HepG2 (cell line): ENCODE measurements at regions of chr5 and their contacts with region 1.

Region 1: DNA sequence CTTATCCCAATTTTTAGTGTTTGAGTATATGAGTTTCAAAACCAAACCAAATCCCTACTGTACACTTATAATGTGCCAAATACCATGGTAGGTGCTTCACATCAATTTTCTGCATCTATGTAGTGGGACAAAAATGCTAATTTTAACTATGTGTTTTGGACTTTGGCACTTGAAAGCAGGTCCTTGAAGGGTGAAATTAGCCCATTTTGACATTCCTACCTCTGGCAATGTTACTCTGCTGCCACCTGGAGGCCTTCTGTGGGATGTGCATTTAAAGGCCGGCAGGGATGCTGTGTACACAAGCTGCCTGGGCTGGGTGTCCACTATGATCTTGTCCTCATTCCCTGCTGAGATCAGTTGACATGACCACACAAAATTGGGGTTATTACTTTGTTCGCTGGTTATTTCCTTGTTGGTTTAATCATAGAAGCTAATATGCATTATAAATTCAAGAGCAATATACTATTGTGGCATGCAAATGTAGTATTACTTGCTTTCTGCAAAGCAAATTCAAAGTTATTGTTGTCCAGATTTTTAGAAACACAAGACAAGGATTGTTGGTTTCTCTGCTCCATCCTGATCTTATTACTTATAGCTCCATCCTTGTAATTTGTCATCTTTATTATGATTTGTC is 166.8 kb downstream of the ARHGEF28 start:
- DNase-seq: peak; percentile 74
- ATAC-seq: peak; percentile 89
- H3K4me3 ChIP-seq: no peak overlapping the region
- H3K27ac ChIP-seq: no peak overlapping the region
- H3K4me1 ChIP-seq: peaks cover 36% of the 10 kb centered on the region
- H3K27me3 ChIP-seq: no peaks in the 10 kb centered on the region
- CTCF ChIP-seq: peak; percentile 96
- EP300 ChIP-seq: no peak; a peak in 1 of 4 replicates
- POLR2A ChIP-seq: no peak
- RAD21 ChIP-seq: peak; percentile 94

Region 2: GRCh38 chr5:73519531-73520283 is 273.1 kb before region 1 on chr5:
- CTCF ChIA-PET with region 1: interaction called, 4 read pairs
- POLR2A ChIA-PET with region 1: no interaction called
- in situ Hi-C with region 1: no loop called
- intact Hi-C with region 1: loop called (anchors 1 kb)
- DNase-seq: peak; percentile 84
- ATAC-seq: peak; percentile 98
- H3K4me3 ChIP-seq: peak overlapping the region; percentile 20 to 58 (median 44); a peak in 4 of 6 replicates
- H3K27ac ChIP-seq: no peak overlapping the region
- H3K4me1 ChIP-seq: 0 out of 2 replicates have a peak, but pooled peaks cover 5% of the 10 kb centered on the region
- H3K27me3 ChIP-seq: no peaks in the 10 kb centered on the region
- CTCF ChIP-seq: peak; percentile 95
- EP300 ChIP-seq: no peak
- POLR2A ChIP-seq: no peak
- RAD21 ChIP-seq: peak; percentile 87

Region 3: GRCh38 chr5:73591102-73591695 is 201.6 kb before region 1 on chr5:
- CTCF ChIA-PET with region 1: interaction called, 37 read pairs
- POLR2A ChIA-PET with region 1: no interaction called
- in situ Hi-C with region 1: loop called (anchors 5 kb)
- intact Hi-C with region 1: loop called (anchors 1 kb)
- DNase-seq: peak; percentile 79
- ATAC-seq: peak; percentile 77
- H3K4me3 ChIP-seq: no peak overlapping the region
- H3K27ac ChIP-seq: no peak overlapping the region
- H3K4me1 ChIP-seq: peaks cover 9% of the 10 kb centered on the region
- H3K27me3 ChIP-seq: no peaks in the 10 kb centered on the region; a peak in 1 of 5 replicates
- CTCF ChIP-seq: peak; percentile 78
- EP300 ChIP-seq: no peak
- POLR2A ChIP-seq: no peak
- RAD21 ChIP-seq: peak; percentile 81

Region 4: GRCh38 chr5:73693481-73694061 is 99.2 kb before region 1 on chr5:
- CTCF ChIA-PET with region 1: interaction called, 4 read pairs
- POLR2A ChIA-PET with region 1: no interaction called
- in situ Hi-C with region 1: no loop called
- intact Hi-C with region 1: loop called (anchors 1 kb)
- DNase-seq: peak; percentile 56
- ATAC-seq: peak; percentile 87
- H3K4me3 ChIP-seq: no peak overlapping the region
- H3K27ac ChIP-seq: peak overlapping the region; percentile 43
- H3K4me1 ChIP-seq: peaks cover 33% of the 10 kb centered on the region
- H3K27me3 ChIP-seq: no peaks in the 10 kb centered on the region
- CTCF ChIP-seq: peak; percentile 68
- EP300 ChIP-seq: no peak
- POLR2A ChIP-seq: no peak
- RAD21 ChIP-seq: peak; percentile 61; the same call in 1 of the 2 replicates

Region 5: GRCh38 chr5:73729329-73729728 is 63.5 kb before region 1 on chr5:
- CTCF ChIA-PET with region 1: no interaction called
- POLR2A ChIA-PET with region 1: no interaction called
- in situ Hi-C with region 1: no loop called
- intact Hi-C with region 1: loop called (anchors 5 kb)
- DNase-seq: peak; percentile 93
- ATAC-seq: peak; percentile 98
- H3K4me3 ChIP-seq: no peak overlapping the region; a peak in 1 of 6 replicates
- H3K27ac ChIP-seq: peak overlapping the region; percentile 68
- H3K4me1 ChIP-seq: peaks cover 67% of the 10 kb centered on the region
- H3K27me3 ChIP-seq: no peaks in the 10 kb centered on the region
- CTCF ChIP-seq: peak; percentile 31; the same call in 1 of the 2 replicates
- EP300 ChIP-seq: peak in 1 of 2 experiments; percentile 91; a peak in 2 of 4 replicates
- POLR2A ChIP-seq: no peak
- RAD21 ChIP-seq: no peak

Region 6: DNA sequence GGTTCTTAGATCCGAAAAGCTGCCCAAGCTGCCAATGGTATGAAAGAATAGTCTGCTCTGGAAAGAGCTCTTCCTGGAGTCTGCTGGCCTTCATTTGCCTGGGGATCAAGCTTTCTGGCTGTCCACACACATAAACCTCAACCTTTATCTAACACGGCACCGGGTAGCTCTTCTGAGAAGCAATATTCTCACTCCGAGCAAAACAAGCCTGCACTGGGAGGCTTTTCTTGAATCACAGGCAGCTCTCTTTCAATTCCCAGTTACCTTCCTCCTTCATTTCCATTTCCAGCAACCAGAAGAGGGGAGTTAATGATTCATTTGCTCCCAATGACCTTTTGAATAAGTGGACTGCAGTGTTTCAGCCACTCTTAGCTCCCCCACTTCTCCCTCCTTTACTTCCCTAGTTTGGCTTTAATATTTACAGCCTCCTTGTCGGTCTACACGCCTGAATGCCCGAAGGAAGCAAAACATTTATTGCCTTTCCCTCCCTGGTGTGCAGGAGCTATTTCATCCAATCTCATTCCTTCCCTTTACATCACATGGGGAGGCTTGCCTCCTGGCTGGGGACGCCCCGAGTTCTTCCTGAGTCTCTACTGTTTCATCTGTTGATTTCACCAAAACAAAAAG is 20.3 kb after region 1 on chr5:
- CTCF ChIA-PET with region 1: no interaction called
- POLR2A ChIA-PET with region 1: interaction called, 14 read pairs
- in situ Hi-C with region 1: no loop called
- intact Hi-C with region 1: no loop called
- DNase-seq: peak; percentile 74
- ATAC-seq: peak; percentile 84
- H3K4me3 ChIP-seq: peak overlapping the region; percentile 65 to 78 (median 70)
- H3K27ac ChIP-seq: peak overlapping the region; percentile 84
- H3K4me1 ChIP-seq: peaks cover 45% of the 10 kb centered on the region
- H3K27me3 ChIP-seq: no peaks in the 10 kb centered on the region
- CTCF ChIP-seq: no peak
- EP300 ChIP-seq: no peak
- POLR2A ChIP-seq: peak; percentile 47 to 49; a peak in 3 of 4 replicates
- RAD21 ChIP-seq: 0 out of 2 replicates have a peak, but pooled peaks have one; percentile 8